GM13976 (cell line): ENCODE measurements at regions of chr4 and their contacts with region 1.

Region 1: DNA sequence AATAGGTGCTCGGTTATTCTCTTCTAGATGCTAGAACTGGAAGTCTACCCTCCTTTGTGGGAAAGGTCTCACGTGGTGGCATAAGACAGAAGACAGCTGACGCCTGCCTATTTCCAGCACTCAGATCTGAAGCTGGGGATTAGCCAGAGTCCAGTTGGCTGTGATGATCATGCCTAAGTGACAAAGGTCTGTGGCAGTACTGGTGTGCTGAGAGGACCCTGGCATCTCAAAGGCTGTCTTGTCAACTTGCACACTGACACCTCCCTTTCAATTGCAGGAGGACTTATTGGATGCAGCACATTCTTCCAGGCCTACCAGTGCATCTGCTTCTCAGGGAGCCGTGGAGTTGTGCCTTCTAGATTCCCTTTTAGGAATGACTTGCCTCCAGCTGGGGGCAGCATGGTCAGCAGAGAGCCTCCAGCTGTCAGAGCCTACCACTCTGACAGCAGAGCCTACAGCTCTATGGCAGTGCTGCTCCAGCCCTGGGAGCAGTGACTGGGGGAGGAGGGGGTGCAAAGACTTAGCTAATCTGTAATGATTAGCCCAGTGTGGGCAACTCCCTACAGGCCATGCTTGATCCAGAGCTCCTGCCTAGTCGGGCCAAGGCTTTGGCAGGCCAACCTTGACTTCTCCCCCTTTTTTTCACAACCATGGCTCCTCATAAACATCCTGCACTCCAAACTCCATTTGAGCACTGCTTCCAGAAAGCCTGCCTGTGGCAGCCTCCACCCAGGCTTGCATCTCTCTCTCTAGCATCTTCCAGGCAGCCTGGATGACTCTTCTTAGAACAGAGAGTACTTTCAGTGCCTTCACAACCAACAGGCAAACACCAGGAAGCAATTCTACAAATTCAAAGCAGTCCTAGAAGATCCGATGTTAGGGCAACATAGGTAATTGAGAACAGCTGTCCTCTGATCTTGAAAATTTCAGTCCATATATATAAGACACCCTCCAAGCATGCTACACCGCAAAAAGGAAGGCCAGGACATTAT is 13.8 kb upstream of the FGFBP2 start:
- DNase-seq: no peak
- CTCF ChIP-seq: no peak

Region 2: GRCh38 chr4:15479089-15479912 is 497.5 kb before region 1 on chr4:
- in situ Hi-C with region 1: loop called (anchors 25 kb)
- DNase-seq: peak; percentile 48
- CTCF ChIP-seq: peak; percentile 35

Region 3: DNA sequence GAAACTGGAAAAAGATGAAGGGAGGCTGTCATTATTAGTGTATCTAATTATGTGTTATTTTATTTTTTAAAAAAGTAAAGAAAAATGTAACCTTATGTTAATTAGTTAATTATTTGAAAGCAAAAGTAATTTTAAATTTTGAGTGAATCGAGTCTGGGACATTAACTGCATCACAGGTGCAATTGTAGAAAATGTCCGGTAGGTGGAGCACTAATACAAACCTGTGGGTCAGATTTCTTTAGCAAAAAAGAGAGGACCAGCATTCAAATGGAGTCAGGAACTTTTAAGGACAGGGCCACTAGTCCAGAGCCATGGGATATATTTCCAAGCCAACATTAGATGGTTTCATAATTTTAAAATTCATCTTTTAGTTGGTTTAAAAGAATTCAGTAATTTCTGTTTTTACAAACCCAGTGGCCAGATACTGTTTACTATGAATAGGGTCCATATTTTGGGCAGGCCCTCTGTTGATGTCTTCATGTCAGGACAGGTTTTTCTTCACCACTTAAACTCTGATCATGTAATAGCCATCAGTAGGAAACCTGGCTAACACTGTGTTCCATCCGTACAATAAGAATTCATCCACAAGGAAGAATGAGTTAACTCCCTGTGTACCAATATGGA is 246.7 kb before region 1 on chr4:
- in situ Hi-C with region 1: loop called (anchors 25 kb)
- DNase-seq: peak; percentile 61
- CTCF ChIP-seq: peak; percentile 72